ENCODE measurements at regions of chr18 and their contacts with region 1.

Region 1: DNA sequence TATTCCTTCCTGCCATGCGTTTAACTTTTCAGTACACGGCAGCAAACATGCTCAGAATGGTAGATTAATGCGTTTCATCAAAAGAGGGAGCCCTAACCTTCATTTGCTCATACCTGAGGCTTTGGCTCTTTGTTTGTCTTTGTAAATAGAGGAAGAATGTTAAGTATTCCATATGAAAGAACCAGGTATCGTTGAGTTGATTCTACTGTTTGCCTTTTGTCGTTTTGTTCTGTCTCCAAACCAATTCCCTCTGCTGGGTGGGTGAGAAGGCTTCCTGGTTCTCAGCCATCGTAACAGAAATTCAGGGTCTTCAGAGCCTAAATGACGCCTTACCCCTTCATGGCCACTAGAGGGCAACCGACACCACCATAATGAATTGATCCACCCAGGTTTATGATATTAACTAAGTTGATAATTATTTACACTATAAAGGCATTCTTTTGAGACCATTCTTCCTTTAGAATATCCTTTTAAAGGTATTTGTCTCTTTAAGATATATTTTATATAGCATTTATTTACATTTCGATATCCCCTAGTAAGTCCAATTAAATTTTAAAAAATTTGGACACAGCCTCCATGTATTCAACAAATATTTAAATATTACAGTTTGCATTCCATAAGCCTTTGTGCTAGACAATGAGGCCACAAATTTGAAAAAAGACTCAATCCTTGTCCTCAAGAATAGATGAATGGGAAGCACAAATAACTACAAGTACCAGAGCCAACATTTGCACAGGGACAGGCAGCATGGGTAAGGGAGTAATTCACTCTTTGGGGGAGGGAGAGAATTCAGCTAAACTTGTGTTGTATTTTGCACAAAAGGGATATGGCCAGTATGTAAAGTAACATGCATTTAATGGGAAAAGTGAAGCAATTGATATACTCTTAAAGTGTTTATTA is 48.1 kb downstream of the TIMM21 start:
- DNase-seq: peak; percentile 13 to 85 (median 40)
- ATAC-seq: peak; percentile 87 to 95 (median 90)
- H3K4me3 ChIP-seq: peak overlapping the region; percentile 31 to 42
- H3K4me3 Mint-ChIP-seq: peak overlapping the region; percentile 60 to 75 (median 67)
- H3K27ac ChIP-seq: peak overlapping the region; percentile 31
- H3K27ac Mint-ChIP-seq: peak overlapping the region; percentile 63 to 82
- H3K4me1 ChIP-seq: no peaks in the 10 kb centered on the region
- H3K4me1 Mint-ChIP-seq: peaks cover 0 to 4% (median 3%) of the 10 kb centered on the region in 3 donors
- H3K27me3 ChIP-seq: peaks cover 0 to 19% of the 10 kb centered on the region in 2 experiments
- H3K27me3 Mint-ChIP-seq: peaks cover 6 to 8% of the 10 kb centered on the region in 2 donors

Region 2: GRCh38 chr18:74242438-74243096 is 46.1 kb after region 1 on chr18:
- CTCF ChIA-PET with region 1: no interaction called
- POLR2A ChIA-PET with region 1: no interaction called
- DNase-seq: no peak
- ATAC-seq: no peak
- H3K4me3 ChIP-seq: no peak overlapping the region
- H3K4me3 Mint-ChIP-seq: no peak overlapping the region
- H3K27ac ChIP-seq: no peak overlapping the region
- H3K27ac Mint-ChIP-seq: no peak overlapping the region
- H3K4me1 ChIP-seq: no peaks in the 10 kb centered on the region
- H3K4me1 Mint-ChIP-seq: no peaks in the 10 kb centered on the region
- H3K27me3 ChIP-seq: peaks cover 0 to 12% of the 10 kb centered on the region in 2 experiments
- H3K27me3 Mint-ChIP-seq: peaks cover 9 to 14% of the 10 kb centered on the region in 2 donors

Region 3: DNA sequence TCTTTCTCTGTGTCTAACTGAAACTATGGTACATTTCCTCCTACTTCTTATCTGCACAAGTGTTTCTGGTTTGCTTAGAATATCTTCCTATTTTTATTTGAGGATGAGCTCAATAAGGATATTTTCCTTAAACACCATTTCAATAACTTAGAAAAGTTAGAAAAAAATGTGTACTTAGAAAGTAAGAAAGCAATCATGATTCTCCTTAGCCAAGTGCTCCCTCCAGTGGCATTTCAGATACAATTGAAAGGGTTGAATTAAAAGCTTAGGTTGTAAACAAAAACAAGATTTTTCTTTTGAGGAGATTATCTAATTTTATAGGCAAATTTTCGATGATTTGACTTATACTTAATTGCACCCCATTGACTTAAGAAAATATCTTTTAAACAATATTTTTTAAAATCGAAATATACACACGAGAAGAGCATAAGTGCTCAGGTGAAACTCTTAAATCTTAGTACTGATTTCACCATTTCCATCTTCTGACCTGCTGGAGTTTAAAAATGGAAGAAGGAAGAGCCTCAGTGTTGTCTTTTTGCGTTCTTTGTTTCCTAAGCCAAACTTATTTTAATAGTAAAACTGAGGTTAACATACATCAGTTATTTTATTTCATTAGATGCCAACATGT is 146.1 kb after region 1 on chr18:
- CTCF ChIA-PET with region 1: interaction called, 11 to 20 read pairs
- POLR2A ChIA-PET with region 1: no interaction called
- DNase-seq: peak in 16 of 35 experiments; percentile 8 to 71 (median 19)
- ATAC-seq: peak in 1 of 4 experiments; percentile 48
- H3K4me3 ChIP-seq: no peak overlapping the region
- H3K4me3 Mint-ChIP-seq: no peak overlapping the region
- H3K27ac ChIP-seq: no peak overlapping the region
- H3K27ac Mint-ChIP-seq: no peak overlapping the region
- H3K4me1 ChIP-seq: no peaks in the 10 kb centered on the region
- H3K4me1 Mint-ChIP-seq: peaks cover 0 to 2% (median 0%) of the 10 kb centered on the region in 3 donors
- H3K27me3 ChIP-seq: peaks cover 0 to 4% of the 10 kb centered on the region in 2 experiments
- H3K27me3 Mint-ChIP-seq: peaks cover 3% of the 10 kb centered on the region in 2 donors